ENCODE measurements at regions of chr17 and their contacts with region 1.

Region 1: GRCh38 chr17:7989781-7990655 is 12.4 kb upstream of the GUCY2D start:
- DNase-seq: peak; percentile 92
- CTCF ChIP-seq: peak; percentile 98

Region 2: GRCh38 chr17:7856883-7857723 is 132.9 kb before region 1 on chr17 and contains the start of gene NAA38:
- CTCF ChIA-PET with region 1: interaction called, 121 read pairs
- POLR2A ChIA-PET with region 1: no interaction called
- DNase-seq: peak; percentile 93
- CTCF ChIP-seq: peak; percentile 72

Region 3: DNA sequence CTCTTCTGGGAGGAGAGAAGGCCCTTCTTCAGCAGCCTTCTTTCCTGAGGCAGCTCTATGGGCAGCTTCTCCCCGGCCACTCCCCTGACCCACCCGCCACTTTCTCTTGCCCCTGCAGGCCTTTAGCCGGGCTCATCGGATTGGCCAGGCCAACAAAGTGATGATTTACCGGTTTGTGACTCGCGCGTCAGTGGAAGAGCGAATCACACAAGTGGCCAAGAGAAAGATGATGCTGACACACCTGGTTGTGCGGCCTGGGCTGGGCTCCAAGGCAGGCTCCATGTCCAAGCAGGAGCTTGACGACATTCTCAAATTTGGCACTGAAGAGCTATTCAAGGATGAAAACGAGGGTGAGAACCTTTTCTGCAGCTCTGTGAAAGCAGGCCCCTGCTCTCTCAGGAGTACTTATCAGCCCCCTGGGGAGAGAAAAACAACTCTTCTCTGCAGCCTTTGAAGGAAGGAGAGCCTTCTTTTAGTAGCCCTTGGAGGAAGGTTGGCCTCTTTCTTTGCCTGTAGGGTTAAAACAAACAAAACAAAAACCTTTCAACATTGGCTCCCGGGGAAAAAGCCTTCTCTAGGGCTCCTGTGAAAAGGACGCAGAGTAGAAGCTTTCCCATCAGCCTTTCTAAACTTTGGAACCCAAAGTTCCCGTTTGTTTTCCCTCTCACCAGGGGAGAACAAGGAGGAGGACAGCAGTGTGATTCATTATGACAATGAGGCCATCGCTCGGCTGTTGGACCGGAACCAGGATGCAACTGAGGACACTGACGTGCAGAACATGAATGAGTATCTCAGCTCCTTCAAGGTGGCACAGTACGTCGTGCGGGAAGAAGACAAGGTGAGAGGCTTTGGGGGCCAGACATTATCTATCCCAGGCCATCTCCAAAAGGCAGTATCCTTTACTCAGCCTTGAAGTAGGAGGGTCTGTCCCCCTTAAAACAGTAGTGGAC is 86.6 kb before region 1 on chr17:
- CTCF ChIA-PET with region 1: interaction called, 234 read pairs
- POLR2A ChIA-PET with region 1: no interaction called
- DNase-seq: no peak
- CTCF ChIP-seq: no peak

Region 4: DNA sequence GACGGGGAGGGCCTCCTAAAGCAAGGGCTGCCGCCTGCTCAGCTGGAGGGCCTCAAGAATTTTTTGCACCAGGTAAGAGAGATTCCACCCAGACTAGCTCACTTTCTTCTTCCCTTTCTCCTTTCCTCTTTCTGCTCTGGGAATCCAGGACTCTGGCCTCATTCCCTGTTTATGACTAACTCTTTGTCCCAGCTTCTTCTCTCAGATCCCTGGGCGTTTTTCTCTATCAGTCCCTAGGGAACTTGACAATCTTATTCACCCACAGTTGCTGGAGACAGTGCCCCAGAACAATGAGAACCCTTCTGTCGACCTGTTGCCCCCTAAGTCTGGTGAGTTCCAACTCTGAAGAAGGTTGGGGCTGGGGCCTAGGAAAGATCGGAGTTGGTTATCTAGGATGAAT is 42.4 kb before region 1 on chr17:
- CTCF ChIA-PET with region 1: interaction called, 32 read pairs
- POLR2A ChIA-PET with region 1: no interaction called
- DNase-seq: no peak
- CTCF ChIP-seq: no peak

Region 5: DNA sequence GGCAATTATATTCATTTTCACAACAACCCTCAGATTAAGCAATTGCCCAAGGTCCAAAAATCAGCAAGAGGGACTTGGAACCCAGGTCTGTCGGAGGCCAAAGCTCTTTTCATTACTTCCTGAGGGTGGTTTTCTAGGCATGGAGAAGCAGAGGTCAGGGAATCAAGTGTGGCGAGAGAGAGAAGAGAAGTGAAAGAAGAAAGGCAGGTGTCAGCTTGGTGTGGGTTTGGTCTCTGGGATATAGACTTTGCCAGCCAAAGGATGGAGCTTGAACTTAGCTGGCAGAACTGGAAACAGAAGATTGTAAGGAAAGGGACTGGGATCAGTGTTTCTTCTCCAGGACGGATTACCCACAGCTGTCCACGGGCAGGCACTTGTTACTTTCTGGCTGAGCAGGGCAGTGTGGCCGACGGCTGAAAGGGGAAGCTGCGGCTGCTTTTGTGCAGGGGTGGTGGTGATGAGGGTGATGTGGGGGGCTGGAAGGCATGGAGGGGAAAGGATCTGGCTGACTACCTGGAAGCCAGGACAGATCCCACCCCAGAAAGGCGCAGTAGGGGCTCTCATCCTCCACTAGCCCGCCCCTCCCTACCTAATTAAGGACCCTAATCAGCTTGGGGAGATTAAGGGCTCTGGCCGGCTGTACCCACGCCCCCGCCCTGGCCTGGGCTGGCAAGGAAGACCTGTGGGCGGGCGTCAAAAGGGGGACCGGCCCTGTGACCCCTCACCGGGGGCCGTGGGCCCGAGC is 12.1 kb after region 1 on chr17 and contains the start of gene GUCY2D:
- CTCF ChIA-PET with region 1: interaction called, 30 read pairs
- POLR2A ChIA-PET with region 1: no interaction called
- DNase-seq: peak; percentile 58
- CTCF ChIP-seq: no peak

Region 6: DNA sequence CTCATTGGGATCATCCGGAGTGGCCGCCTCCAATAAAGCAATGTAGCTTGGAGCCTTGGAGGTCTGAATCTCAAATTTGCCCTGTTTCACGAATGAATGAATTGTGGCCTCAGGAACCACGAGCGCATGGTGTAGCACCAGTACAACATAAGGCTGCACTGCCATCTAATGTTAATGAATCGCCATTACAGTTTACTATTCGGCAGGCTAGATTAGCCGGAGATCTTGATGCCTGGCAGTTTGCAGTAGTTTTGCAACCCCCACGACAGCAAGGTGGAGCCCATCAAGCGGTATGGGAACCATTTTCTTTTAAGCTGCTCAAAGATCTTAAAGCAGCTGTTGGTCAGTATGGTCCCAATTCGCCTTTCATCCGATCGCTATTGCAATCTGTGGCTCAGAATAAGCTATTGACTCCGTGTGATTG is 67.7 kb after region 1 on chr17:
- CTCF ChIA-PET with region 1: interaction called, 37 read pairs
- POLR2A ChIA-PET with region 1: no interaction called
- DNase-seq: peak; percentile 79
- CTCF ChIP-seq: peak; percentile 74

Region 7: GRCh38 chr17:8125157-8125946 is 135.3 kb after region 1 on chr17:
- CTCF ChIA-PET with region 1: no interaction called
- POLR2A ChIA-PET with region 1: no interaction called
- DNase-seq: peak; percentile 80
- CTCF ChIP-seq: no peak

Measured in GM10248 (cell line).